ENCODE measurements at regions of chr19 and their contacts with region 1.

Region 1: GRCh38 chr19:18251587-18252369 is 22.5 kb downstream of the IQCN start:
- DNase-seq: peak; percentile 93
- ATAC-seq: peak; percentile 83
- H3K4me3 Mint-ChIP-seq: no peak overlapping the region
- H3K27ac Mint-ChIP-seq: peak overlapping the region; percentile 35; the same call in 1 of the 2 replicates
- H3K4me1 Mint-ChIP-seq: peaks cover 22% of the 10 kb centered on the region
- H3K27me3 Mint-ChIP-seq: peaks cover 13% of the 10 kb centered on the region
- CTCF ChIP-seq: peak; percentile 99

Region 2: DNA sequence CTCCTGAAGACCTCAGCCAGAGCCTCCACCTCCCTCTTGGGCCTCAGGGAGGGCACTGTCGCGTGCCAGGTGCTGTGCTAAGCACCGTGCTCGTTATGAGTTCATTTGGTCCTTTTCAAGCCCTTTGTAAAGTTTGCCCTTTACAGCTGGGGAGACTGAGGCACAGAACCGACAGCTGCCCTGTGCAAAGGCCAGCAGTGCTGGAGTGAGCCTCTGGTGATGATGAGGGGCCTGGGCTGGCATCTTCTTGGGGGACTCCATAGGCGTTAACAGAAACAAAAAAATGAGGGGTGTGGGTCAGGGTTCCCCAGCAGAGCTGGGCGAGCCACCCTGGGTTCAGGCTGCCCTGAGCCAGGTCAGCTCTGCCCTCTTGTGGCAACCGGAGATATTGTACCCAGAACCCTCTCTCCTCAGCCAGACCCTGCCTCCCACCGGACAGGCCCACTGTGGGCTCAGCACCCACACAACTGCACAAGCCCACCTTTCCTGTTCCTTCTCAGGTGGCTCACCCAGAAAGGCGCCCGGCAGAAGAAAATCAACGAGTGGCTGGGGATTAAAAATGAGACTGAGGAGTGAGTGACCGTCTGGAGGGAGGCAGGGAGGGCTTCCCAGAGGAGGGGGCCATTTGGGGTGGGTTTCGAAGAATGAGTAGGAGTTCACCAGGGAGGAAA is 83.7 kb before region 1 on chr19:
- CTCF ChIA-PET with region 1: interaction called, 13 read pairs
- POLR2A ChIA-PET with region 1: no interaction called
- DNase-seq: peak; percentile 71
- ATAC-seq: peak; percentile 93
- H3K4me3 Mint-ChIP-seq: no peak overlapping the region
- H3K27ac Mint-ChIP-seq: no peak overlapping the region
- H3K4me1 Mint-ChIP-seq: no peaks in the 10 kb centered on the region; the same call in 1 of the 2 replicates
- H3K27me3 Mint-ChIP-seq: no peaks in the 10 kb centered on the region
- CTCF ChIP-seq: peak; percentile 81

Region 3: DNA sequence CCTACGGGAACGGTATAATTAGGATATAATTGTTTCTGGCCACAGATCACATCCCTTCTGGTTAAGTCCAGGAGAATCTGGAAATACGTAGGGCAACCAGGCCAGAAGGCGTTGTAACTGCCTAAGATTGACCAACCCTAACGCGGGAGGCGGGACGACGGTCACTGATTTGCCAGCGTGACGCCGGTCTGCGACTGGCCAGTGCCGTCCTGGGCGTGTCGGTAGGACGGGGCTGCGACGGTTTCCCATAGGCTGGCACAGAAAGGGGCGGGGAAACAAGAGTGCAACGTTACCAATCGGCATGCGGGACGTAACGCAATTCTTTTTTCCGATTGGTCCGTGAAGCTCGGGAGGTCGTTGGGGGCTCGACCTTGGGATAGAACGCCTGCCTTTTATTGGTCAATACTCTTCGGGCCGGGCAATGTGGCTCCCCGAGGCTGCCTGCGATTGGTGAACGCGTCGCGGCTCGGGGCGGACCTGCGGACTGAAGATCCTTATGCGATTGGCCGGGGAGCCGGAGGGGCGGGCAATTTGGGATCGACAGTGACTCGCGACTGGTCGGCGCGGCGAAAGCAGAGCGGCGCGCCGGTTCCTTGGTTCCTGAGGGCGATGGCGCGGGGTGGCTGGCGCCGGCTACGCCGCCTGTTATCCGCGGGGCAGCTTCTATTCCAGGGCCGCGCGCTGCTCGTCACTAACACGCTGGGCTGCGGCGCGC is 58.9 kb before region 1 on chr19 and contains the start of gene MPV17L2:
- CTCF ChIA-PET with region 1: interaction called, 42 read pairs
- POLR2A ChIA-PET with region 1: interaction called, 3 read pairs
- DNase-seq: peak; percentile 99
- ATAC-seq: peak; percentile 94
- H3K4me3 Mint-ChIP-seq: peak within 1 kb of the TSS; percentile 82
- H3K27ac Mint-ChIP-seq: peak within 1 kb of the TSS; percentile 97
- H3K4me1 Mint-ChIP-seq: peaks cover 20% of the 10 kb centered on the region
- H3K27me3 Mint-ChIP-seq: peaks cover 2% of the 10 kb centered on the region; the same call in 1 of the 2 replicates
- CTCF ChIP-seq: no peak
- total RNA-seq, gene MPV17L2: 26.3 to 29.8 TPM (median 28.0 TPM) in 3 replicates

Region 4: DNA sequence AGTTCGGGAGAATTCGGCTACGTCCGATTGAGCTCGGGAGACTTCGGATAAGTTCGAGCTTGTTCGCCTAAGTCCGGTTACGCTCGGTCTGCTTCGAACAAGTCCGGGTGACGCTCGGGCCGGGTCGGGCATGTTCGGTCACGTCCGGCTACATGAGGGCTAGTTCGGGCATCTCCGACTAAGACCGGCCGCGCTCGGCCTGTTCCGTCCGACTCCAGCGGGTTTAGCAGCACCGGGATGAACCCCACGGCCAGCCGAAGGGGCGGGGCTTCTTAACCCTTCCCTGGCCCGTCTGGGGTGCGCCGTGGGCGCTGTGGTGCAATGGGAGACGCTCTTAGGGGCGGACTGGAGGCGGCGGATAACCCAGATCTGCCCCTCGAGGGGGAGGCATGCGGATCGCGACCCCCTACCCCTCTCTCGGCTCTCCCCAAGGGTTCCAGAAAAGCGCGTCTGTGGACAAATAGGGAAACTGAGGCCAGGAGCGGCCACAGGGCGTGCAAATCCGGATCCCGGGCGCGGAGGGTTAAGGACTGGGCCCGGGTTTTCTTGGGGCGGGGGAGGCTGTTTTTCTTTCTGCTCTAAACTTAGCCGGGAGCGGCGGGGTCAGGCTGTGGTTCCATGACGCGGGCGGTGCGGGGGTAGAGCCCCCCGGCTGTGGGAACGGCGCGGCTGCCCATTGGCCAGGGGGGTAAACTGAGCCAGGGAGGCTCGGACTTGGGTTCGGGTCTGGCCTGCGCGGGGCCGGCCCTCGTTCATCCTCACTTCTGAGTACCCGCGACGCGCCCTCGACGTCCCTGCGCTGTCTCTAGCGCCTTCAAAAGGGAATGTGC is 27.0 kb before region 1 on chr19:
- CTCF ChIA-PET with region 1: interaction called, 72 read pairs
- POLR2A ChIA-PET with region 1: interaction called, 3 read pairs
- DNase-seq: peak; percentile 100
- ATAC-seq: peak; percentile 91
- H3K4me3 Mint-ChIP-seq: peak overlapping the region; percentile 92
- H3K27ac Mint-ChIP-seq: peak overlapping the region; percentile 100
- H3K4me1 Mint-ChIP-seq: peaks cover 30% of the 10 kb centered on the region
- H3K27me3 Mint-ChIP-seq: peaks cover 42% of the 10 kb centered on the region
- CTCF ChIP-seq: no peak

Region 5: DNA sequence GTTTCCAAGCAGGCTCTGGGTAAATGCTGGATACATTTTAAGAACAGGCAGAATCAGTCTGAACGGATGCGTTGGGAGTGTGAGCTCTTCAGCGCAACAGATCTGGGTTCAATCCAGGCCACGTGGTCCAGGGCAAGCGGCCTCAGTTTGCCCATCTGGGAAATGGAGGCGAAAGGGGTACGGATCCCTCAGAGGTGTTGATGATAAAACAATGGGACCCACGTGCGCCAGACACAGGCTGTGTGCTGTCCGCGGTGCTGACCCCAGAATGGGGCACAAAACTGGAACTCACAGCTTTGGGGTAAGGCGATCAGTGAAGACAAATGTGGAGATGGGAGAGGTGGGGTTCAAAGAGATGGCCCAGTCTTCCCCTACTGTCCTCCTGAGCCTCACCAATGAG is 12.5 kb before region 1 on chr19:
- CTCF ChIA-PET with region 1: interaction called, 100 read pairs
- POLR2A ChIA-PET with region 1: no interaction called
- DNase-seq: peak; percentile 57
- ATAC-seq: no peak; the same call in 1 of the 2 replicates
- H3K4me3 Mint-ChIP-seq: no peak overlapping the region
- H3K27ac Mint-ChIP-seq: no peak overlapping the region
- H3K4me1 Mint-ChIP-seq: peaks cover 5% of the 10 kb centered on the region; the same call in 1 of the 2 replicates
- H3K27me3 Mint-ChIP-seq: peaks cover 18% of the 10 kb centered on the region
- CTCF ChIP-seq: no peak